Activated CD4-positive, alpha-beta T cell treated with anti-CD3 and anti-CD28 coated beads, Interleukin-2, amount 10 ng/mL, durations not matched to agents 7 days and 5 days (primary cell): ENCODE measurements at regions of chr9 and their contacts with region 1.

Region 1: DNA sequence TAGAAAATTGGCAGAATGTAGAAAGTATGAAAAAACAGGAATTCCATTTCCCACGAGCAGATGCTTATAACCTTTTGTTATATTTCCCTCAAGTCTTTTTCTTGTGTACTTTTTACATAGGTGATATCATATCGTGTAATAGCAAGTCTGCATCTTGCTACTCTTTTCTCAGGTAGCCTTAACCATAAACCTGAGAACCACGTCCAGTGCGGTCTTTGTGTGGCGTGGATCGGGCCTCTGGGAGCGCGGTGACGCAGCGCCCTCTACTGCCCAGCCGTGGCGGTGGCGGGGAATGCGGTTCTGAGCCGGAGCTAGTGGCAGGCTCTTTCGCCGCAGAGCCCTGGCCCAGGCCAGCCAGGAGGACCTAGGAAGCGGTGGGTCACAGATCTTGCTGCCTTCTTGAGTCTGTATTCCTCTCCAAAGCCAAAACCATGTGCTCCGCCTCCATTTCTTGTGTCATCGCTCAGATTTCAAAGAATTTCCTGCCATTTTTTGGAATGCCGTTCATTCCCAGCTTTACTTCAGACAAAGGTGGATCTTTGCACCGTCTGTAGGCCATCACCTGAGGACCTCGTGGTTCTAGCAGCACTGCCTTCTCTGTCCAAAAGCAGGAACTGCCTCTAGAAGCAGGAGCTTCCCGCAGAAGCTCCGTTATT is 71.9 kb downstream of the MVB12B start:
- DNase-seq: peak; percentile 72
- H3K4me3 Mint-ChIP-seq: peak overlapping the region; percentile 10
- H3K27ac Mint-ChIP-seq: peak overlapping the region; percentile 72
- H3K4me1 Mint-ChIP-seq: peaks cover 81% of the 10 kb centered on the region
- H3K27me3 Mint-ChIP-seq: peaks cover 4% of the 10 kb centered on the region

Region 2: GRCh38 chr9:126411225-126411947 is 12.9 kb after region 1 on chr9:
- CTCF ChIA-PET with region 1: interaction called, 10 read pairs
- POLR2A ChIA-PET with region 1: no interaction called
- DNase-seq: peak; percentile 73
- H3K4me3 Mint-ChIP-seq: peak overlapping the region; percentile 66
- H3K27ac Mint-ChIP-seq: peak overlapping the region; percentile 98
- H3K4me1 Mint-ChIP-seq: peaks cover 61% of the 10 kb centered on the region
- H3K27me3 Mint-ChIP-seq: no peaks in the 10 kb centered on the region